Dendritic cell treated with granulocyte-macrophage colony-stimulating factor and Interleukin-4, amounts not matched to agents 40 ng/mL and 50 ng/mL, for 4 days (primary cell): ENCODE measurements at regions of chr19 and their contacts with region 1.

Region 1: GRCh38 chr19:56170261-56170660 is 5.5 kb upstream of the GALP start:
- H3K4me3 Mint-ChIP-seq: no peak overlapping the region
- H3K27ac Mint-ChIP-seq: no peak overlapping the region
- H3K4me1 Mint-ChIP-seq: peaks cover 4% of the 10 kb centered on the region
- H3K27me3 Mint-ChIP-seq: peaks cover 9% of the 10 kb centered on the region

Region 2: GRCh38 chr19:56053596-56053995 is 116.7 kb before region 1 on chr19:
- intact Hi-C with region 1: no loop called
- H3K4me3 Mint-ChIP-seq: no peak overlapping the region
- H3K27ac Mint-ChIP-seq: no peak overlapping the region
- H3K4me1 Mint-ChIP-seq: no peaks in the 10 kb centered on the region
- H3K27me3 Mint-ChIP-seq: no peaks in the 10 kb centered on the region

Region 3: GRCh38 chr19:56080669-56081401 is 89.4 kb before region 1 on chr19:
- intact Hi-C with region 1: loop called (anchors 1 kb)
- H3K4me3 Mint-ChIP-seq: peak overlapping the region; percentile 72
- H3K27ac Mint-ChIP-seq: peak overlapping the region; percentile 78
- H3K4me1 Mint-ChIP-seq: peaks cover 23% of the 10 kb centered on the region
- H3K27me3 Mint-ChIP-seq: peaks cover 4% of the 10 kb centered on the region

Region 4: DNA sequence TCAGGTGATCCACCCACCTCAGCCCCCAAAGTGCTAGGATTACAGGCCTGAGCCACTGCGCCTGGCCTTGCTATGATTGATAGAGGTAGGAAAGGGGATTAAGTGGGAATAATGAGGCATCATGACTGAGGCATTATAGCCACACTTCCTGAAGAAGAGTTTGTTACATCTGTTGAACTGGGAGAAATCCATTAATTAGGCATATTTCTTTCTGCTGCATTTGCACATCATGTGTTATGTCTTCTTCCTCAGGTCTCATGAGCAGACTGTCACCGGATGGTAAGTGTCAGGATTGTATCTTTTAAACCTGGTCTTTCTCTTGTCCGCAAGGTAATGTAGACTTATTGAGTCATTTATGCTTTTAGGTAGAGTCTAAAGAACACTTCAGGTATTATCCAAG is 114.5 kb after region 1 on chr19:
- intact Hi-C with region 1: no loop called
- H3K4me3 Mint-ChIP-seq: no peak overlapping the region
- H3K27ac Mint-ChIP-seq: no peak overlapping the region
- H3K4me1 Mint-ChIP-seq: peaks cover 20% of the 10 kb centered on the region
- H3K27me3 Mint-ChIP-seq: no peaks in the 10 kb centered on the region